MCF 10A (cell line): ENCODE measurements at regions of chr11 and their contacts with region 1.

Region 1: GRCh38 chr11:110026858-110027626 is 66.2 kb upstream of the ZC3H12C start:
- DNase-seq: no peak
- H3K4me3 Mint-ChIP-seq: no peak overlapping the region
- H3K27ac Mint-ChIP-seq: no peak overlapping the region
- H3K4me1 Mint-ChIP-seq: peaks cover 10% of the 10 kb centered on the region
- H3K27me3 Mint-ChIP-seq: no peaks in the 10 kb centered on the region
- CTCF ChIP-seq: no peak

Region 2: GRCh38 chr11:110077831-110078325 is 50.8 kb after region 1 on chr11:
- CTCF ChIA-PET with region 1: no interaction called
- POLR2A ChIA-PET with region 1: interaction called, 19 read pairs
- intact Hi-C with region 1: no loop called
- DNase-seq: peak; percentile 64
- H3K4me3 Mint-ChIP-seq: no peak overlapping the region
- H3K27ac Mint-ChIP-seq: peak overlapping the region; percentile 54
- H3K4me1 Mint-ChIP-seq: peaks cover 34% of the 10 kb centered on the region
- H3K27me3 Mint-ChIP-seq: no peaks in the 10 kb centered on the region
- CTCF ChIP-seq: no peak

Region 3: DNA sequence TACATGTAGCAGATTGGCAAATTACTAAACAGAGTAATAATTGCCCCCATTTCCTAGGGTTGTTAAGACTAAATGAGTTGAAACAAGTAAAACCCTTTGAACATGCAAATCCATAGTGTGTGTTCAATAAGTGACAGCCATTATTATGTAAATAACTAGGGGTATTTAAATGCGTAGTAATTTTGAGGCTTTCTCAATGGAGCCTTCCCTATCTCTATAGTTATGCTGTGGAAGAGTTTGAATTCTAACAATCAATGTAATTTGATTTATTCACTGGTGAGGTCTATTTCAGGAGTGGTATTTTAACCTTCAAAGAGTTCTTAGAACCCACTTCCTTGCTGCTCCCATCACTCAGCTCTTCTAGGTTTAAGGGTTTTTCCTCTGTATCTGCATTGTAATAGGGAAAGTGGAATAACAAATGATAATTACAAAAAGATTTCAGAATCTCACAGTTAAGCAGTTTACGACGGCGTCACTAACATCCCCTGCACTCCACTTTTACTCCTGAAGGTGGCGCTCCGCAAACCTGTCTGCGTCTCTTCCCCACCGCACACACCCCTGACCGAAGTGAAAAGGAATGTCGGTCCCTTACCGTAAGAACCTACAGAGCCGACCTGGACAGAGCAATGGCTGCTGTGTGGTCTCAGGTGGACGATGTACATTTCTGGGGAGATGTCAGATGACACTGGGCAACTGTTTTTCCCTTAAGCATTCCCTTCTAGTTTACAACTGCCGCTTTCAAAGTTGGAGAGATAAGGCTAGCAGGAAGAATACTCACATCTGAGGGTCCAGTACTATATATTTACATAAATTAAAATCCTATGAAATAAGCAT is 147.0 kb after region 1 on chr11:
- CTCF ChIA-PET with region 1: no interaction called
- POLR2A ChIA-PET with region 1: no interaction called
- intact Hi-C with region 1: no loop called
- DNase-seq: peak; percentile 51
- H3K4me3 Mint-ChIP-seq: no peak overlapping the region
- H3K27ac Mint-ChIP-seq: peak overlapping the region; percentile 83
- H3K4me1 Mint-ChIP-seq: peaks cover 12% of the 10 kb centered on the region
- H3K27me3 Mint-ChIP-seq: no peaks in the 10 kb centered on the region
- CTCF ChIP-seq: peak; percentile 64